Panc1 (cell line): ENCODE measurements at regions of chr9 and their contacts with region 1.

Region 1: DNA sequence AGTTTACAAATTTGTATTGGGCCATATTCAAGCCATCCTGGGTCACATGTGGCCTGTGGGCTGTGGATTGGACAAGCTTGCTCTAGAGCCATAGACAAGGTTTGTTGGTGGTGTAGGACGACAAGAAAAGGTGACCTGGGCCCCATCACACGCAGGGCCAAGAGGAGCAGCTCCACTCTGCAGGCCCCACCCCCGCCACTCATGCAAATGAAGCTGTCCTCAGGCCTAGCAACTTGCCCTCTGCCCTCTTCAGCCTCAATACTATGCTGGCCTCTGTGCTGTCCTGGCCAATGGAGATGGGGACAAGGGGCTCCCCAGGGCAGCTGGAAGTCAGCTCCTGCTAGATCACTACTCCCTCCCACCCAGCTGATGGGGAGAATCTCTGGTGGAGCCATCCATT is 55.2 kb upstream of the TMEM252 start:
- DNase-seq: no peak
- ATAC-seq: no peak
- H3K4me3 ChIP-seq: no peak overlapping the region
- H3K27ac ChIP-seq: no peak overlapping the region
- H3K4me1 ChIP-seq: no peaks in the 10 kb centered on the region
- H3K27me3 ChIP-seq: no peaks in the 10 kb centered on the region
- CTCF ChIP-seq: no peak

Region 2: DNA sequence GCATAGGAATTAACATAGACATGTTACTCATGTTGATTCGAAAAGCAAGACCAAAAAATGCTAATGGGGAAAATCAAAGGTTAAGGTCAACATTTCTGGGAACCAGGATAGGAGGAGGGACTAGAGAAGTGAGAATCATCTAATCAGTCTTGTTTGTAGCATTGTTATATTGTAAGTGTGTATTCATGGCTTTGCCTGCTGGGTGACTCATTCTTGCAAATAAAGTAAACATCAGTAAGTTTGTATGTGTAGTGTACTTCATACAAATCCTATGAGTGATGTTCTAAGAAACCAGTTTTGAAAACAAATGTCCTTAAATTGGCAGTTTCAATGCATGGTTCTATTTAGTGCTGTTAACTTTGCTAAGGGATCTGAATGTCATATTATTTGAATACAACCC is 23.8 kb after region 1 on chr9:
- CTCF ChIA-PET with region 1: interaction called, 11 read pairs
- POLR2A ChIA-PET with region 1: no interaction called
- in situ Hi-C with region 1: no loop called
- intact Hi-C with region 1: no loop called
- DNase-seq: no peak
- ATAC-seq: no peak
- H3K4me3 ChIP-seq: no peak overlapping the region
- H3K27ac ChIP-seq: no peak overlapping the region
- H3K4me1 ChIP-seq: no peaks in the 10 kb centered on the region
- H3K27me3 ChIP-seq: no peaks in the 10 kb centered on the region
- CTCF ChIP-seq: no peak

Region 3: GRCh38 chr9:68999393-69000105 is 403.7 kb after region 1 on chr9:
- CTCF ChIA-PET with region 1: interaction called, 10 read pairs
- POLR2A ChIA-PET with region 1: no interaction called
- in situ Hi-C with region 1: no loop called
- intact Hi-C with region 1: no loop called
- DNase-seq: peak; percentile 58
- ATAC-seq: peak; percentile 88
- H3K4me3 ChIP-seq: no peak overlapping the region
- H3K27ac ChIP-seq: no peak overlapping the region
- H3K4me1 ChIP-seq: no peaks in the 10 kb centered on the region
- H3K27me3 ChIP-seq: no peaks in the 10 kb centered on the region
- CTCF ChIP-seq: peak; percentile 77